H1 (cell line): ENCODE measurements at regions of chr7 and their contacts with region 1.

Region 1: DNA sequence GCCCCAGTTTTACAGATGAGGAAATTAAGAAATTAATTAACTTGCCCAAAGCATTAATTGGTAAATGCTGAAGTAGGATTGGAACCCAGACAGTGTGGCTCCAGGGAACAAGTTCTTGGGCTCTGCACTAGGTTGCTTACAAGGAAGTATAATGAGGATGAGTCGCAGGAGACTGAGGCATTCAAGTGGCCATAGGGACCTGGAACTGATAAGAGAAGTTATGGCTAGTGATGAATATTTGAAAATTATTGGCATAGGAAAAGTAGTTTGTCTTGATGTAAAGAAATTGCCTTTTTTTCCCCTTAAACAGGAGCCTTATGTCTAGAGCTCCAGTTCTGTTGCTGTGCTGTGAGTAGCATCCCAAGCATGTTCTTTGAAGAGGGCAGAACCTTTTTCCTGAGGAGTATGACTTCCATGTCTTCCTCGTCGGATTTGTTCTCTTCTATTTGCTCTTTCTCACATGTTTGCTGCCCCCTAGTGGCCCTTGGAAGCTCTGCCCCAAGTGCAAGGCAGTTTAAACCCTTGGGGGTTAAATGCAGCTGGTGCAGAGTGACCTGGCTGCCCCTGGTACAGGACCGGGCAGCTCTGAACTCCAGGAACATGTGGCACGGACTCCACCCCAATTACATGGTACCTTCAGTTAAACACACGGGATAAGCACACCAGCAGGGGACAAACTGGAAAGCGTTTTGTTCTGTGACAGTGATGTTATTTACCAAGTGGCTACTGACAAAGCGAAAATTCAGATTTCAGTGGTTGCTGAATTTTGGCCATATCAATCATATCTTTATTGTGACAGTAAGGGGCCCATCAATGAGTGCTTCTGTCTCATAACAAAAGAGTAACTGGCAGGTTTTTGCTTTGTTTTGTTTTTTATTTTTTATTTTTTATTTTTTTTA is 148.8 kb downstream of the HECW1 start:
- DNase-seq: peak; percentile 72 to 87
- H3K4me3 ChIP-seq: no peak overlapping the region
- H3K27ac ChIP-seq: no peak overlapping the region
- H3K4me1 ChIP-seq: no peaks in the 10 kb centered on the region; a peak in 1 of 7 replicates
- H3K27me3 ChIP-seq: no peaks in the 10 kb centered on the region
- CTCF ChIP-seq: peak; percentile 70 to 96 (median 88)
- EP300 ChIP-seq: no peak
- POLR2A ChIP-seq: no peak
- RAD21 ChIP-seq: peak; percentile 95 to 96

Region 2: DNA sequence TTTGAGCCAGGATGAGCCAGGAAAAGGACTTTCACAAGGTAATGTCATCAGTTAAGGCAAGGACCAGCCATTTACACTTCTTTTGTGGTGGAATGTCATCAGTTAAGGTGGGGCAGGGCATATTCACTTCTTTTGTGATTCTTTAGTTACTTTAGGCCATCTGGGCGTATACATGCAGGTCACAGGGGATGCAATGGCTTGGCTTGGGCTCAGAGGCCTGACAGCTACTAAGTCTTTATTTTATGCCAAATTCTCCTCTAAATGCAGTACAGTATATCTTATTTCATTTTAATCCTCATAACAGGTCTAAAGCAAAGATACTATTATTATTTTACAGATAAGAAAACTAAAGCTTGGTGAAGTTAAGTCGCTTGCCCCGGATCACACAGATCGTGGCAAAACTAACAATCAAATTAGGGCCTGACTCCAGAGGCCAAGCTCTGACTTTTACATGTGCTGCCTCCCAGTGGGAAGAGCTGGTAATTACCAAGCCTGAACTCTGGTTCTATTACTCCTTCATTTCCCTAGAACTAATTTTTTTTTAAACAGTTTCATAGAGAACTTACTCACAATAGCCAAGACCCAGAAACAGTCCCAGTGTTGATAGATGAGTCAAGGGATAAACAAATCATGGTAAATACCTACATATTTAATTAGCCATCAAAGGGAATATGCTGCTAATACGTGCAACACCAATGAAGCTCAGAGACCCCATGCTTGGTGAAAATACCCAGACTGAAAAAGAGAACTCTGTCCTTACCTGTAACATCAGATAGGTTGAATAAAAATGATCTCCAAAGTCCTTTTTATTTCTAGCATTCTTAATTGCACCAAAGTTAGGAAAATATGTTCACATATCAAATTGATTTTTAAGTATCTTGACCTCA is 384.8 kb before region 1 on chr7:
- CTCF ChIA-PET with region 1: no interaction called
- POLR2A ChIA-PET with region 1: no interaction called
- DNase-seq: no peak
- H3K4me3 ChIP-seq: no peak overlapping the region
- H3K27ac ChIP-seq: no peak overlapping the region
- H3K4me1 ChIP-seq: no peaks in the 10 kb centered on the region
- H3K27me3 ChIP-seq: no peaks in the 10 kb centered on the region
- CTCF ChIP-seq: peak; percentile 22 to 70 (median 67)
- EP300 ChIP-seq: no peak
- POLR2A ChIP-seq: no peak
- RAD21 ChIP-seq: peak; percentile 68 to 79

Region 3: DNA sequence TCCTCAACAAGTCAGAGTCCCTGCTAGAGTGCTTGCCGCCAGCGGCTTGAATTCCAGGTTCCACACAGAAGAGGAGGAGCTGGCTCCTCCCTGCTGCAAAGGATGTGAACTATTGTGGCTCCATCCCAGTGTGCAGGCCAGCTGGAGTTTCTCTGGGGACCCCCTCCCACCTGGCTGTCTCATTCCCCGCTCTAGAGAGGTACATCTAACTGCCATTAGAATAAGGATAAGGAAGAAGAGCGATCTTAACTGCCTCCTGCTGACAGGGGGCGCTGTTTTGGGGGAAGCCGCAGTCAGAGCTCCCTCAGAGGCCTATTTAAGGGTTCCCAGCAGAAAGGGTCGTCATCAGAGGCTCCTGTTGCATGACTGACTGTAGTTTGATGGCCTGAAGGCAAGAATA is 189.6 kb before region 1 on chr7:
- CTCF ChIA-PET with region 1: interaction called, 25 read pairs
- POLR2A ChIA-PET with region 1: no interaction called
- DNase-seq: peak; percentile 69 to 90
- H3K4me3 ChIP-seq: no peak overlapping the region
- H3K27ac ChIP-seq: no peak overlapping the region
- H3K4me1 ChIP-seq: peaks cover 0 to 3% (median 1%) of the 10 kb centered on the region in 4 experiments; a peak in 3 of 7 replicates
- H3K27me3 ChIP-seq: no peaks in the 10 kb centered on the region
- CTCF ChIP-seq: peak; percentile 66 to 89 (median 77)
- EP300 ChIP-seq: no peak
- POLR2A ChIP-seq: no peak
- RAD21 ChIP-seq: peak; percentile 56 to 75

Region 4: GRCh38 chr7:43175570-43176200 is 85.5 kb before region 1 on chr7:
- CTCF ChIA-PET with region 1: interaction called, 13 read pairs
- POLR2A ChIA-PET with region 1: no interaction called
- DNase-seq: no peak
- H3K4me3 ChIP-seq: no peak overlapping the region
- H3K27ac ChIP-seq: no peak overlapping the region
- H3K4me1 ChIP-seq: peaks cover 0 to 6% (median 3%) of the 10 kb centered on the region in 4 experiments; a peak in 5 of 7 replicates
- H3K27me3 ChIP-seq: no peaks in the 10 kb centered on the region
- CTCF ChIP-seq: no peak
- EP300 ChIP-seq: no peak
- POLR2A ChIP-seq: no peak
- RAD21 ChIP-seq: no peak

Region 5: GRCh38 chr7:43248961-43249822 is 12.0 kb before region 1 on chr7:
- CTCF ChIA-PET with region 1: interaction called, 40 read pairs
- POLR2A ChIA-PET with region 1: interaction called, 3 read pairs
- DNase-seq: no peak
- H3K4me3 ChIP-seq: no peak overlapping the region
- H3K27ac ChIP-seq: peak overlapping the region; percentile 40; the same call in 1 of the 2 replicates
- H3K4me1 ChIP-seq: peaks cover 0 to 6% (median 2%) of the 10 kb centered on the region in 4 experiments; a peak in 3 of 7 replicates
- H3K27me3 ChIP-seq: no peaks in the 10 kb centered on the region
- CTCF ChIP-seq: no peak
- EP300 ChIP-seq: no peak
- POLR2A ChIP-seq: no peak
- RAD21 ChIP-seq: no peak

Region 6: GRCh38 chr7:43454936-43455518 is 193.8 kb after region 1 on chr7:
- CTCF ChIA-PET with region 1: interaction called, 16 read pairs
- POLR2A ChIA-PET with region 1: no interaction called
- DNase-seq: no peak
- H3K4me3 ChIP-seq: no peak overlapping the region
- H3K27ac ChIP-seq: no peak overlapping the region
- H3K4me1 ChIP-seq: peaks cover 0 to 3% (median 2%) of the 10 kb centered on the region in 4 experiments; a peak in 4 of 7 replicates
- H3K27me3 ChIP-seq: no peaks in the 10 kb centered on the region
- CTCF ChIP-seq: peak in 2 of 3 experiments; percentile 37 to 46; a peak in 2 of 4 replicates
- EP300 ChIP-seq: no peak
- POLR2A ChIP-seq: no peak
- RAD21 ChIP-seq: peak; percentile 68 to 71